ENCODE measurements at regions of chr15 and their contacts with region 1.

Region 1: DNA sequence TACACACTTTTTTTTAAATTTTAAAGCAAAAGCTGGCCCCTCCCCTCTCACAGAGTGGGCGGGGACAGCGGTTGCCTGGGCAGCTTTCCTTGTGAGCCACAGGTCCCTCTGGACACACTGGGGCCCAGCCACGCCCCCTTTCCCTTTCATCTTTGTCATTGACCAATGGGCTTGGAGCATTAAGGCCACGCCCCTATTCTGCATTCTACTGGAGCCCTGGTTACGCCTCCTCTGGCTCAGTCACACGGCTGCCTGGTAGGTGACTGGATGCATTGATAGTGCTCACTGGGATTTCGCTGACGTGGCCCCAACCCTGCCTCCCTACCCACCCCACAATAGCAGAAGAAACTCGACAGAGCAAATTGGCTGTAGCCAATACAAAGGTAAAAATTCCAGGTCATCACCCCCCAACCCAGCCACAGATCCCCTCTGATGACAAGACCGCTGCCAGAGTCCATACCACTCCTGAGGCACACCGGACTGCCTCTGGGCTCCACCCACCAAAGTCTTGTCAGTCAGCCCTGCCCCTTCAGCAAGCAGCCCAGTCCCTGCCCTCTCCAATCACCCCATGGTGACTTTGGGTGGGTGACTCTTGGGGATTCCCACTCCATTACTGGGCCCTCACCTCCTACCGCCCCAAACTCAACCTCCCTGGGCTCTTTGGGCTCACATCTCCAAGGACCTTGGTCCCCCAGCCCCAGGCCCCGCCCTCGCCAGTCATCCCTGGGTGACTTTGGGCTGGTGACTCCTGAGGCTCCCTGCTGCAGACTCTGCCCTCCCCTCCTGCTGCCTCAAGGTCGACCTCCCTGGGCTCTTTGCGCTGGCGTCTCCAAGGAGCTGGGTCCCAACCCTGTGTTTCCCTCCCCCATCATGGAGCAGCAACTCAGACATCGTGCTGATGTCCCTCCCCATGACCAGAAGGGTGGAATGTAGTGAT is 112.2 kb upstream of the FAN1 start:
- DNase-seq: no peak
- ATAC-seq: no peak
- H3K4me3 ChIP-seq: no peak overlapping the region
- H3K27ac ChIP-seq: no peak overlapping the region
- H3K4me1 ChIP-seq: no peaks in the 10 kb centered on the region
- H3K27me3 ChIP-seq: no peaks in the 10 kb centered on the region
- CTCF ChIP-seq: no peak

Region 2: GRCh38 chr15:29390051-29390450 is 1401.5 kb before region 1 on chr15:
- intact Hi-C with region 1: no loop called
- DNase-seq: no peak
- ATAC-seq: no peak
- H3K4me3 ChIP-seq: no peak overlapping the region
- H3K27ac ChIP-seq: no peak overlapping the region
- H3K4me1 ChIP-seq: no peaks in the 10 kb centered on the region
- H3K27me3 ChIP-seq: no peaks in the 10 kb centered on the region
- CTCF ChIP-seq: no peak

Region 3: DNA sequence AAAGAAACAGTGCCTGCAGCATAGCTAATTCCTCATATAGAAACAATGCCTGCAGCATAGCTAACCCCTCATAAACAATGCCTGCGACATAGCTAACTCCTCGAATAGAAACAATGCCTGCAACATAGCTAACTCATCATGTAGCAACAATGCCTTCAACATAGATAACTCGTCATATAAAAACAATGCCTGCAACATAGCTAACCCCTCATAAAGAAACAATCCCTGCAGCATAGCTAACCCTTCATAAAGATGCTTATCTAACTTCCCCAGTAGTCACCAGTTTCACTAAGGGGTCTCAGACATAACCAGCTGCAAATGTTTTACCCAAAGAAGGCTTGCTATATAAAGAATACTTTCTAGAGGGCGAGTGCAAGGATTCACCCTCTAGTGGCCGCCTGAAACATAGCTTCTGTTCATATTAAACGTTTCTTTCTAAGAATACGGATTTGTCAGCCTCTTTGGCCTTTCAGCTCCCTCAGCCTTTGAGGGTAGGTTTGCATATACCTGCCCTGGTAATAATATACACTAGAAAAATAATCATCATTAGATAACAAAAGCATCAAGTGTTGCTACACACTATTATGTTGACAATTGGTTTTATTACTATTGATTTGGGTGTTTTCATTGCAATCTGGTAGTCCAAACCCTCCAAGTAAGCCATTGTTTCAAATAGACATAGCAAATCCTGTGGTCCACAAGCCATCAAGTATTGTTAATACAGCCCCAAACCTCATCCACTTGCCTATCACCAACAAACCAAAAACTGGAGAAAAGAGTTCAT is 67.8 kb after region 1 on chr15:
- intact Hi-C with region 1: no loop called
- DNase-seq: no peak
- ATAC-seq: peak in 2 of 4 donors; percentile 39 to 48
- H3K4me3 ChIP-seq: no peak overlapping the region
- H3K27ac ChIP-seq: no peak overlapping the region
- H3K4me1 ChIP-seq: no peaks in the 10 kb centered on the region
- H3K27me3 ChIP-seq: no peaks in the 10 kb centered on the region
- CTCF ChIP-seq: peak in 3 of 4 donors; percentile 34 to 45 (median 39)

Region 4: GRCh38 chr15:30903497-30904201 is 112.1 kb after region 1 on chr15 and contains the start of gene FAN1:
- intact Hi-C with region 1: no loop called
- DNase-seq: peak; percentile 78 to 96 (median 92)
- ATAC-seq: peak; percentile 96 to 100 (median 98)
- H3K4me3 ChIP-seq: peak within 1 kb of the TSS; percentile 52 to 86 (median 58)
- H3K27ac ChIP-seq: peak within 1 kb of the TSS; percentile 13 to 73 (median 53)
- H3K4me1 ChIP-seq: peaks cover 0 to 12% (median 4%) of the 10 kb centered on the region in 3 donors
- H3K27me3 ChIP-seq: no peaks in the 10 kb centered on the region
- CTCF ChIP-seq: no peak
- total RNA-seq, gene FAN1: 4.2 to 13.0 (median 8.8) TPM

Region 5: DNA sequence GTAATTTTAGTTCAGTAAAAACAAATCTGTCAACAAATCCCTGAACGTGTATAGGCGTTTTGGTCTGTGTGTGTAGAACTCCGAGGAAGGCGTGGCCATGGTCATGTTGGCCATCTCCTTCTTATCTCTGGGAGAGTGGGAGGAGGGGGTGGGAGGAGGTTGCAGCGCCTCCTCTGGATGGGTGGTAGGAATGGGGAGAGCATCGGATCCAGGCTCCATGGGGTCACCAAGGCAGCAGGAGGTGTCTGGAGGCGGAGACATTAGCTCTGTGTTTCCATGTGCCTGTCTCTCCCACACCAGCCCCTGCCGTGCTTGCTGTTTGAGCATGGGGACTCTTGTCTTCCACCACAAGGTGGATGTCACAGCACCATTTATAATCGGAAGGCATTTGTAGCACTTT is 344.5 kb after region 1 on chr15:
- intact Hi-C with region 1: loop called in 1 of 3 experiments (anchors 10 kb)
- DNase-seq: no peak
- ATAC-seq: no peak
- H3K4me3 ChIP-seq: no peak overlapping the region
- H3K27ac ChIP-seq: no peak overlapping the region
- H3K4me1 ChIP-seq: no peaks in the 10 kb centered on the region
- H3K27me3 ChIP-seq: no peaks in the 10 kb centered on the region
- CTCF ChIP-seq: no peak